ENCODE measurements at regions of chr22 and their contacts with region 1.

Region 1: GRCh38 chr22:17638432-17639246 is at the start of gene BCL2L13:
- DNase-seq: peak; percentile 91 to 93
- ATAC-seq: peak; percentile 92 to 97 (median 93)
- H3K4me3 ChIP-seq: peak within 1 kb of the TSS; percentile 72
- H3K4me3 Mint-ChIP-seq: peak within 1 kb of the TSS; percentile 91
- H3K27ac ChIP-seq: peak within 1 kb of the TSS; percentile 96
- H3K27ac Mint-ChIP-seq: peak within 1 kb of the TSS; percentile 96 to 100
- H3K4me1 ChIP-seq: peaks cover 18% of the 10 kb centered on the region
- H3K4me1 Mint-ChIP-seq: peaks cover 25 to 30% of the 10 kb centered on the region in 2 donors
- H3K27me3 ChIP-seq: no peaks in the 10 kb centered on the region
- H3K27me3 Mint-ChIP-seq: no peaks in the 10 kb centered on the region
- CTCF ChIP-seq: no peak
- total RNA-seq, gene BCL2L13: 19.1 to 28.7 (median 23.3) TPM

Region 2: GRCh38 chr22:17628304-17629166 is 10.1 kb before region 1 on chr22 and contains the start of gene ATP6V1E1:
- intact Hi-C with region 1: loop called (anchors 1 kb)
- DNase-seq: peak; percentile 97
- ATAC-seq: peak; percentile 99 to 100 (median 100)
- H3K4me3 ChIP-seq: peak within 1 kb of the TSS; percentile 81
- H3K4me3 Mint-ChIP-seq: peak within 1 kb of the TSS; percentile 96
- H3K27ac ChIP-seq: peak within 1 kb of the TSS; percentile 82
- H3K27ac Mint-ChIP-seq: peak within 1 kb of the TSS; percentile 94 to 99
- H3K4me1 ChIP-seq: peaks cover 23% of the 10 kb centered on the region
- H3K4me1 Mint-ChIP-seq: peaks cover 10 to 19% of the 10 kb centered on the region in 2 donors
- H3K27me3 ChIP-seq: no peaks in the 10 kb centered on the region
- H3K27me3 Mint-ChIP-seq: no peaks in the 10 kb centered on the region
- CTCF ChIP-seq: no peak
- total RNA-seq, gene ATP6V1E1: 75.8 to 79.8 (median 76.4) TPM

Region 3: DNA sequence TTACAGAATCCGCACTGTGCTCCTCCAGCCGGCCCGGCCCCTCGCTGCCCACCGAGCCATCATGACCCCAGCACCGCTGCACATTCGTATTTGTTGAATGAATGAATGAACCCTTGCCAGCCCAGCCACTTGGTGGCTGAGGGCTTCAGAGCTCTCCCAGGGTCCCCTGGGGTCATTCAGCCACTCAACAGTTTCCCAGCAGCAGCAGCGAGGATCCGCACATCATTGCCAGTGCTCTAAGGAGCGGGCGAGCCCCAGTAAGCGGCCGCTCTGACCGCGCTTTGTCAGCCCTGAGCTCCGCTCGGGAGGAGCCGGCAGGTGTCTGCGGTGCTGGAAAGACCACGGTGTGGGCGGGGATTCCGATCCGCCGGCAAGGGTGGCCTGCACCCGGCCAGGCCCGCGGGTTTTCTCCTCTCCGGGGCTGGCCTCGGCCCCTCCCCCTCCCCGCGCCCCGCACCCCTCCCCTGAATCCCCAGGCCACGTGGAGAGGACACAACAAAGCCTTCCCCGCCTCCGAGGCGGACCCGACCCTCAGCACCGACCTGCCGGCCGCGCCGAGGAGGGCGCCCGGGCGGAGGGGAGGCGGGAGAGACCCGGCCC is 135.1 kb after region 1 on chr22:
- intact Hi-C with region 1: loop called (anchors 1 kb)
- DNase-seq: peak; percentile 79 to 81
- ATAC-seq: peak; percentile 52 to 72 (median 65)
- H3K4me3 ChIP-seq: peak overlapping the region; percentile 64
- H3K4me3 Mint-ChIP-seq: peak overlapping the region; percentile 94
- H3K27ac ChIP-seq: peak overlapping the region; percentile 59
- H3K27ac Mint-ChIP-seq: peak overlapping the region; percentile 82 to 90
- H3K4me1 ChIP-seq: peaks cover 90% of the 10 kb centered on the region
- H3K4me1 Mint-ChIP-seq: peaks cover 58 to 64% of the 10 kb centered on the region in 2 donors
- H3K27me3 ChIP-seq: no peaks in the 10 kb centered on the region
- H3K27me3 Mint-ChIP-seq: no peaks in the 10 kb centered on the region
- CTCF ChIP-seq: no peak